Natural killer cell (primary cell): ENCODE measurements at regions of chr1 and their contacts with region 1.

Region 1: GRCh38 chr1:168342572-168343280 is 62.0 kb downstream of the TBX19 start:
- DNase-seq: peak; percentile 82 to 97
- ATAC-seq: peak; percentile 94 to 96 (median 95)
- H3K4me3 ChIP-seq: no peak overlapping the region
- H3K4me3 Mint-ChIP-seq: peak overlapping the region; percentile 53
- H3K27ac ChIP-seq: peak overlapping the region; percentile 57
- H3K27ac Mint-ChIP-seq: peak overlapping the region; percentile 67 to 85
- H3K4me1 ChIP-seq: peaks cover 13% of the 10 kb centered on the region
- H3K4me1 Mint-ChIP-seq: peaks cover 54 to 64% of the 10 kb centered on the region in 2 donors
- H3K27me3 ChIP-seq: no peaks in the 10 kb centered on the region
- H3K27me3 Mint-ChIP-seq: no peaks in the 10 kb centered on the region
- CTCF ChIP-seq: peak; percentile 87

Region 2: DNA sequence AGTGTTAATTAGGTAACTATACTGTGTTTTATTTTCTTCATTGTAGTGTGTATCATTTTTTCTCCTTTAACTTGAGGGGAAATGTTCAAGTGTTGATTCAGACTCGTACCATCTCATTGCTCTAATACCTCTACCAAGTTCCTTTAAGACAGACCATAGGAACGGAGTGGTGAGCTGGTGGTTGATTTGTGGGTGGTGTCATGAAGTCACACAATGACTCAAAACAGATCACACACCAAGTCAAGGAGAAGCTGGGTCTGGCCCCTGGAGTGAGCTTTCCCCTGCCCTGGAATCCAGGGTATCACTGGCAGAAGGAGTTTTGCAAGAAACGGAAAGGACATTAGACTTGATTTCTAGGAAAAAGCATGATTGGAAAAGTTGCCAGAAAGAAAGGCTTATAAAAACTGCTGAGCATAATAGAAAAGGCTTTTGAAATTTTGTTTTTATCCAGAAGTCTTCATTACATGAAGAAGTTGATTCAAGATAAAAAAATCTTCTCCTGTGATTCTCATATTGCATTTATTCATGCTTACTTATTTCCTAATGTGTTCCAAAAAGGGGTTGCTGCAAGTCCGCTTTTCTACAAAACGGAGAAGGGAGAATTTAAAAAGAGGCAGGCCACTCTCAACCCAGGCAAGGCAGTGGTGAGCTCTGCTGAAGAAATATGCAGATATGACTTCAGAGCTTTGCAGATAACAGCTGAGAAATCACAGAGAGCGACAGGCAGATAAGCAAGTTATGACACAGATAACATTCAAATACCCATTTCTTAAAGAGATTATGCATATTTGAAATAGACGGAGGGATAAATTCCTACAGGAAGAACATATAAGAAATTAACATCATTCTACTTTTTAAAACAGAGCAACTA is 17.7 kb after region 1 on chr1:
- intact Hi-C with region 1: loop called (anchors 1 kb)
- DNase-seq: peak; percentile 34 to 39
- ATAC-seq: peak; percentile 29 to 40 (median 33)
- H3K4me3 ChIP-seq: no peak overlapping the region
- H3K4me3 Mint-ChIP-seq: peak overlapping the region; percentile 56
- H3K27ac ChIP-seq: no peak overlapping the region
- H3K27ac Mint-ChIP-seq: peak overlapping the region; percentile 88 to 93
- H3K4me1 ChIP-seq: peaks cover 41% of the 10 kb centered on the region
- H3K4me1 Mint-ChIP-seq: peaks cover 54 to 58% of the 10 kb centered on the region in 2 donors
- H3K27me3 ChIP-seq: no peaks in the 10 kb centered on the region
- H3K27me3 Mint-ChIP-seq: no peaks in the 10 kb centered on the region
- CTCF ChIP-seq: no peak

Region 3: GRCh38 chr1:168408536-168409242 is 66.0 kb after region 1 on chr1:
- intact Hi-C with region 1: loop called (anchors 5 kb)
- DNase-seq: peak in 1 of 2 donors; percentile 74
- ATAC-seq: peak; percentile 63 to 76 (median 71)
- H3K4me3 ChIP-seq: no peak overlapping the region
- H3K4me3 Mint-ChIP-seq: peak overlapping the region; percentile 72
- H3K27ac ChIP-seq: peak overlapping the region; percentile 11
- H3K27ac Mint-ChIP-seq: peak overlapping the region; percentile 72 to 87
- H3K4me1 ChIP-seq: peaks cover 30% of the 10 kb centered on the region
- H3K4me1 Mint-ChIP-seq: peaks cover 42 to 50% of the 10 kb centered on the region in 2 donors
- H3K27me3 ChIP-seq: no peaks in the 10 kb centered on the region
- H3K27me3 Mint-ChIP-seq: no peaks in the 10 kb centered on the region
- CTCF ChIP-seq: no peak

Region 4: DNA sequence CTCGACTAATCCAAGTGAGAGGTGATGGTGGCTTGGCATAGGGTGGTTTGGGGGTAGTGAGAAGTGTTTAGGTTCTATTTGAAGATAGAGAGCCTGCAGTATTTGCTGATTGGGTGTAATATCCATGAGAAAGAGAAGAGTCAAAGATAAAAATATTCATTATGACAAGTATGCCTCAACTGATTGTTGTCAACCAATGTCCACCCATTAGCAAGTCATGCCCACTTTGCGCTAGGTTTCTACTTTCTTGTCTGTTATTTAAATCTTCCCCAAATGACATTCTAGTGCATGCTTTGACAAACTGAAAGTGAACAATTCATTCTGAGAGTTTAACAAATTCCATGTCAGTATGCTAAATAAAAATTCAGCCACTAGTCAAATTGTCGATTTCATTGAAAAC is 229.9 kb after region 1 on chr1:
- intact Hi-C with region 1: loop called (anchors 10 kb)
- DNase-seq: no peak
- ATAC-seq: no peak
- H3K4me3 ChIP-seq: no peak overlapping the region
- H3K4me3 Mint-ChIP-seq: no peak overlapping the region
- H3K27ac ChIP-seq: no peak overlapping the region
- H3K27ac Mint-ChIP-seq: no peak overlapping the region
- H3K4me1 ChIP-seq: peaks cover 6% of the 10 kb centered on the region
- H3K4me1 Mint-ChIP-seq: peaks cover 23 to 28% of the 10 kb centered on the region in 2 donors
- H3K27me3 ChIP-seq: no peaks in the 10 kb centered on the region
- H3K27me3 Mint-ChIP-seq: peaks cover 0 to 7% of the 10 kb centered on the region in 2 donors
- CTCF ChIP-seq: no peak

Region 5: DNA sequence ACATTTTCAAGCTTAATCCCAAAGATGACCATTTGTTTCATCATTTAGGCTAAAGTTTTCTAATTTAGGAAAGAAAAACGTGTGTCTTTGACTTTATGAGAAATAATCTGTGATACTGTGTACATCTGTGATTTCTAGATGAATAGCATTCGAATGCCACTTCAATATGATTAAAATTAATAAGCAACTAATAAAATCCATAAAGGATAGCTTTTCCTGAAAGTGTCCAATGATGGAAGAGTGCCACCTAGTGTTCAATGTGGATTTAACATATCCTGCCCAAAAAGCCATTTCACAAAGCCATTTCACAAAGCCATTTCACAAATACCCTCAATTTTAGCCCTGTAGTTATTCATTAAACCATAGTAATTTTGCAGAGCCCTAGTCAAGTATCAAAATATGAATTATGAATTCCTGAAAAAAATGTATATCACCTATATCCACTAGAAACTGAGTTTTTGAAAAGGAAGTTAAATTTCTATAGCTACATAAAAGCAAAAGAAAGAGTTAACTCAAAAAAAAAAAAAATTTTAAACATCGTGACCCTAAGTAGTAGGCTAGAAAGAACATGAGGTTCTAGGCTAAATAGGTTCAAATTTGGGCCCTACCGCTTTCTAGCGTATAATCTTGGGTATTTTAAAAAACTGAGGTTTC is 1005.8 kb after region 1 on chr1:
- intact Hi-C with region 1: loop called (anchors 5 kb)
- DNase-seq: peak in 1 of 2 donors; percentile 82
- ATAC-seq: peak; percentile 50 to 58 (median 57)
- H3K4me3 ChIP-seq: no peak overlapping the region
- H3K4me3 Mint-ChIP-seq: no peak overlapping the region
- H3K27ac ChIP-seq: no peak overlapping the region
- H3K27ac Mint-ChIP-seq: no peak overlapping the region
- H3K4me1 ChIP-seq: no peaks in the 10 kb centered on the region
- H3K4me1 Mint-ChIP-seq: no peaks in the 10 kb centered on the region
- H3K27me3 ChIP-seq: no peaks in the 10 kb centered on the region
- H3K27me3 Mint-ChIP-seq: no peaks in the 10 kb centered on the region
- CTCF ChIP-seq: peak; percentile 88